Stomach (tissue), 19 donors: ENCODE measurements at regions of chr1 and their contacts with region 1.

Region 1: DNA sequence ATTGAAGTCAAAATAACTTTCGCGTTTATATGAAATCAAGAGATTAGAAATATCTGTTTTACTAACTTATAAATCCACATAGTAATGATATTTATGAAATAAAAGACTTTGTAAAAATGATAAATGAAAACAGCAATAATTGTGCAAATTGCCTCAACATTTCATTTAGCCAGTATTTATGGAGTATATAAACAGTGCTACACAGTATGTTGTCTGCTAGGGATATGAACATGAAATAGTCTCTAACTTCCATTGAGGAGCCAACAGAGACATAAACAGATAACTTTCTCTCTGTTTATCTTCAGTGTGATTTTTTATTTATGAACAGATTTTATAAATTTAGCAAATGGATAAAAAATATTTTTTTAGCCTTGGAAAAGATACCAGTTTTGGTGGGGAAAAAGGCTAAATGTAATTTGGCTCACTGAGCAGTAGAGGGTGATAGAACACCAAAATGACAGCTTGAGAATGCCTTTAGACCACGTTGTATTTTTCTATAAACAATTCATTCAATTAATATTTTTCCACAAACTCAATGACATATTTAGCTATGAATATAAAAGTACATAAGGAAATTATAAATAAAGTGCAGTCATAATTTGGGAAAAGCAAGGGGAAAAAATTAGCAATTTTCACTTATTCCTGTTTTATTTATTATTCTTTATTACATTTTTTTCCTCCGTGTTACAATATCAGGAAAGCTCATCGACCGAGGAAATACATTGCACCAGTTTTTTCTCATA is 47.5 kb upstream of the EEIG2 start:
- DNase-seq: peak in 1 of 2 donors; percentile 65
- H3K4me3 ChIP-seq: no peak overlapping the region
- H3K27ac ChIP-seq: no peak overlapping the region
- H3K4me1 ChIP-seq: no peaks in the 10 kb centered on the region
- H3K27me3 ChIP-seq: peaks cover 0 to 6% (median 0%) of the 10 kb centered on the region in 3 donors
- CTCF ChIP-seq: peak in 5 of 7 experiments; percentile 40 to 84 (median 77)
- EP300 ChIP-seq: no peak
- POLR2A ChIP-seq: no peak

Region 2: DNA sequence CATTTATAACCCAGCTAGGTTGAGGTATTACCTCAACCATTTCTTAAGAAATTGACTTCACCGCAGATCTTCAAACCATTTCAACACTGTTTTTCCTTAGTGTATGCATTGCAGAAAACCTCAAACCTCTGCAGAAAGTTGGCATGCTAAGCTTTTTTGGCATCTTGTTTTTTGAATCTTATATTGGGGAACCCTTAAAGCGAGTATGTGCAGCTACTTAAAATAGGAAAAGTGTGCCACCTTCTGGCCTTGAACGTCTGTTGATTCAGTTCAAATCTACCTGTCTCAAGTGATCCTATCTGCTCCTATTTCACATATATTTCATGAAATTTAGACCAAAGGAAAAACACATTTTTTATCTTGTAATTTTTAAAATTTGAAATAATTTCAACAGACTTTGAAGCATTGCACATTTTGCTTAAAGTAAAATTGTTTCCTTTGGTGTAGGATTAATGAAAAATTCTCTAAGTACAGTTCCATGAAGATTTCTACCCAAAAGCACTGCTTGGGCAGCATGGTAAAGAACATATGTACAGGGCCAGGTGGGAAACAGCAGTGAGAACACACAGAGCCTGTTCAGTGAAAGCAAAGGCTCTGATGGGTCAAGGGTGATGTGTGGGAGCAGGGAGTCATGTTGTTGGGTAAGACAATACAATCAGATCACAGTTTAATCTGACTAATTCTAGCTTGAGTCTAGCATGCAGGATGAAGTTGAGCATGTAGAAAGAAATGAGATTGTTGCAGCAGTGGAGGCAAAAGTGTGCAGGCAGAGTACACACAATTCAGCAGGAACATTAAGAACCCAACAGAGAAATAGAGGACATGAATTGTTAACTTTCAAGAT is 131.3 kb after region 1 on chr1:
- intact Hi-C with region 1: loop called (anchors 5 kb)
- DNase-seq: peak; percentile 50 to 88
- H3K4me3 ChIP-seq: no peak overlapping the region
- H3K27ac ChIP-seq: peak overlapping the region in 1 of 5 donors; percentile 83
- H3K4me1 ChIP-seq: peaks cover 8 to 43% (median 17%) of the 10 kb centered on the region in 4 donors
- H3K27me3 ChIP-seq: no peaks in the 10 kb centered on the region
- CTCF ChIP-seq: peak in 5 of 7 experiments; percentile 34 to 64 (median 46)
- EP300 ChIP-seq: no peak
- POLR2A ChIP-seq: no peak

Region 3: GRCh38 chr1:108785264-108785663 is 272.9 kb after region 1 on chr1:
- intact Hi-C with region 1: no loop called
- DNase-seq: no peak
- H3K4me3 ChIP-seq: no peak overlapping the region
- H3K27ac ChIP-seq: no peak overlapping the region
- H3K4me1 ChIP-seq: no peaks in the 10 kb centered on the region
- H3K27me3 ChIP-seq: no peaks in the 10 kb centered on the region
- CTCF ChIP-seq: no peak
- EP300 ChIP-seq: no peak
- POLR2A ChIP-seq: no peak